Common myeloid progenitor, CD34-positive (primary cell): ENCODE measurements at regions of chrX and their contacts with region 1.

Region 1: GRCh38 chrX:129637217-129638109 is 17.3 kb downstream of the APLN start:
- DNase-seq: peak; percentile 53 to 76 (median 67)
- H3K4me3 ChIP-seq: no peak overlapping the region
- H3K27ac ChIP-seq: no peak overlapping the region
- H3K4me1 ChIP-seq: peaks cover 0 to 8% (median 2%) of the 10 kb centered on the region in 4 experiments
- H3K27me3 ChIP-seq: no peaks in the 10 kb centered on the region

Region 2: DNA sequence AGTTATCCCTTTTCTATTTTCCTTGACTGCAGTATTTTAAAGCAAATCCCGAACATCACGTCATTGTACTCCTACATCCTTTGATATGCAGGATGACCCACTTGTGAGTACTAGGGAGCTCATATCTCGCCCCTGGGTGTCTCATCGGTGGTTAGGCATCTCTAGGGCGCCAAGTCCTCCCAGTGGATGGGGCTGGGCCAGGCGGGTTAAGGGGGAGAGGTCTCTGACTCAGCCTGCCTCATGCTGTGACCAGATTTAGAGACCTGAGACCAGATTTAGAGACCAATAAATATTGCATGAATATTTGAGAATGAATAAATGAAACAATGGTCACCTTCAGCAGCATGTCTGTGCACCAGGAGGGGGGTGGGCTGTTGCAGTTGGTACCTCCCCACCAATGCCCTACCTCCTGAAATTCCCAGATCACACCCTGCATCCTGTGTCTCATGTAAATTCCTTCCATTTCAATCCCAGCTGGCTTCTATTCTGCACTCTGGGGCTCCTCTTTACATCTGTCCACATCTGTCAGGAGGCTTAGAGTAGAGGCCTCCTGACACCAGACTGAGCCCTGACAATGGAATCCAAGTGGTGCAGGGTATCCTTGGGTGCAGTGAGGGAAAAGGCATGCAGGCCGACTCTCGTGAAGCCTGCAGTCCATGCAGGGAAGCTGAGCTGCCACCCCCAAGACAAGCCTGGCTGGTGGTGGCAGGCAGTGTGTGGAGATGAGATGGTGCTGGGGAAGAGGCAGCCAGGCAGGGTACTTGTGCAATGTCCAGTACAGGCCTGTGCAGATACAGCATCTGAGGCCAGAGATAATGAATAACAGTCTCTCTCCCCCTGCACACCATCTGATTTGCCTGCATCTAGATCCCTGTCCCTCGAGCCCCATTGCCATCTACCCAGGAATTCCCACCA is 12.1 kb after region 1 on chrX:
- CTCF ChIA-PET with region 1: interaction called, 11 read pairs
- POLR2A ChIA-PET with region 1: no interaction called
- DNase-seq: no peak
- H3K4me3 ChIP-seq: no peak overlapping the region
- H3K27ac ChIP-seq: no peak overlapping the region
- H3K4me1 ChIP-seq: peaks cover 0 to 11% (median 9%) of the 10 kb centered on the region in 4 experiments
- H3K27me3 ChIP-seq: peaks cover 0 to 30% (median 2%) of the 10 kb centered on the region in 5 experiments

Region 3: GRCh38 chrX:129690435-129690834 is 53.0 kb after region 1 on chrX:
- CTCF ChIA-PET with region 1: interaction called, 12 read pairs
- POLR2A ChIA-PET with region 1: no interaction called
- DNase-seq: no peak
- H3K4me3 ChIP-seq: no peak overlapping the region
- H3K27ac ChIP-seq: no peak overlapping the region
- H3K4me1 ChIP-seq: no peaks in the 10 kb centered on the region
- H3K27me3 ChIP-seq: no peaks in the 10 kb centered on the region